ENCODE measurements at regions of chr3 and their contacts with region 1.

Region 1: DNA sequence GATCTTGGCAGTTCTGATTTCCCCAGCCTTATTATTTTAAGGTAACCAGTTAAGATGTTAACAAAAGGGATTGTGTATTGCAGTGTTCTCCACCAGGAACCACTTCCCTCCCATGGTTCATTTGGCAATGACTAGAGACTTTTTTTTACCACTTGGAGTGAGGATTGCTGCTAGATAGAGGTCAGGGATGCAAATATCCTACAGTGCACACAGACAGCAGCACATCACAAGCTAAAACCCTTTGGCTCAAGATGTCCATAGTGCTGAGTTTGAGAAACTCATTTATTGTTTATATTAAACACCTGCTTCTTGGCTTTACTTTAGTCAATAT is 24.1 kb upstream of the EBLN2 start:
- DNase-seq: no peak
- H3K4me3 ChIP-seq: no peak overlapping the region
- H3K27ac ChIP-seq: peak overlapping the region; percentile 40
- H3K27me3 ChIP-seq: no peaks in the 10 kb centered on the region
- CTCF ChIP-seq: no peak

Region 2: GRCh38 chr3:72907731-72908620 is 129.4 kb before region 1 on chr3:
- CTCF ChIA-PET with region 1: no interaction called
- POLR2A ChIA-PET with region 1: interaction called, 12 read pairs
- DNase-seq: peak; percentile 80
- H3K4me3 ChIP-seq: no peak overlapping the region
- H3K27ac ChIP-seq: peak overlapping the region; percentile 81
- H3K27me3 ChIP-seq: no peaks in the 10 kb centered on the region
- CTCF ChIP-seq: no peak

Measured in AG04450 (cell line).